ENCODE measurements at regions of chr12 and their contacts with region 1.

Region 1: DNA sequence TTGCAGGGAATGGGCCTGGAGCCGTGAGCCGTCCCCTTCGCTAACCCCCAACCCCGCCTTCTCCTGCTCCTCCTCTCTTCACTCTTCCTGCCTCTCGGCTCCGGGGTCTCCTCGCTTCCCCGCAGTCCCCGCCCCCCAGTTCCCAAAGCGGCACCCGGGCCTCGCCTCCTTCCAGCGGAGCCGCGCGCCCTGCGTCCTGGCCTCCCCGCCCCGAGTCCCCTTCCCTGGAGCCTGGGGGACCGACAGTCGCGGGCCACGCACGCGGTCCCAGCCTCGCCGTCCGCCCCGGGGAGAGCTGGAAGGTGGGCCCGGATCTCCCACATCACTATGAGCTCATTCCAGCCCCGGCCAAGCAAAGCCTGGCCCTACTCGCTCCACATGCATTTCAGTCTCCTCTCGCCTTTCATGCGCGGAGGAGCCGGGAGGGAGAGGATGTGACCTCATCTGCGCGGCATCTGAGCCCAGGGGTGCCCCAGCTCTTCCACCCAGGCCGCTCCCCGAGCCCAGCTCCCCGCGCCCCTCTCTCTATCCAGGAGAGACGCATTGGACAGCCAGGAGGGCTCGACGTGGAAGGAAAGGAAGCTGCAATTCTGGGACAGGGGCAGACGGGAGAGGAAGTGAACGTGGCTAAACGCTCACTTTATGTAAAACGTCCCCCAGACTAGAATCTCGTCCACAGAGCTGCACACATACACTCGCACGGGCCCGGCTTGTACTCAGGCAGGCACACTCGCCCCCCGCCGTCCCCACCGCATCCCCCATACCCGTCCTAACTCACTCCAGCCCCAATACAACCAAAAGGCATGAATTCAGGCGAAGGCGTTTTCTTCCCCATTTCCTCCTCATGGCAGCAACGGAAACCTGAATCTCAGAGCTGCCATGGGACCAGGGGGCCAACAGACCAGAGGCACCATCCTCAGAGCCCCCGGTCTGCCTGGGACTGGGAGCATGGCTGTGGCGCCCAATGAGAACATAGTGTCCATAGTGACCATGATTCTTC is 108.7 kb upstream of the CCND2 start:
- DNase-seq: peak; percentile 60
- ATAC-seq: peak; percentile 75
- H3K4me3 Mint-ChIP-seq: peak overlapping the region; percentile 89
- H3K27ac Mint-ChIP-seq: peak overlapping the region; percentile 95
- H3K4me1 Mint-ChIP-seq: peaks cover 42% of the 10 kb centered on the region
- H3K27me3 Mint-ChIP-seq: no peaks in the 10 kb centered on the region
- CTCF ChIP-seq: no peak

Region 2: DNA sequence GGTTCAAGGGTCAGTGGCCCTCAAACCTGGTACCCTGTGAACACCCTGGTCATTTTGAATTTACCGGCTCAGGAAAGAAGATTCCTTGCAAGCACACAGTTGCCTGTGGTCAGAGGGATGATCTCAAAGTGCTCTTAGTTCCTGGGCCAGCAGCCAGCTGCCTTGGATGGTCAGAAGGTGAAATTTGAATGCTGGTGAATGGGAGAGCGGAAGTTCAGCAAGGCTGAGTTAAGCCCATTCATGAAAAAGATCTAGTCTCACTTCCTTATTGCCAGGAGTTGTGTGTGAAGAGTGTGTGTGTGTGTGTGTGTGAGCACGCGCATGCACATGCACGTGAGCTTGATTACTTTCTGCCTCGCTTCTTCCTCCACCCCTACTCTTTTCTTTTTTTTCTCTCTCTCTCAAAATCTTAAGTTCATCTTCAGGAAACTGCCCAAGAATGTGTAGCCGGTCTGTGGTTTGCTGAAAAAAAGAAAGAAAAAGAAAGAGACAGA is 46.8 kb before region 1 on chr12:
- CTCF ChIA-PET with region 1: no interaction called
- POLR2A ChIA-PET with region 1: interaction called, 6 read pairs
- intact Hi-C with region 1: loop called (anchors 1 kb)
- DNase-seq: no peak
- ATAC-seq: peak; percentile 80
- H3K4me3 Mint-ChIP-seq: peak overlapping the region; percentile 69
- H3K27ac Mint-ChIP-seq: peak overlapping the region; percentile 81
- H3K4me1 Mint-ChIP-seq: peaks cover 56% of the 10 kb centered on the region
- H3K27me3 Mint-ChIP-seq: no peaks in the 10 kb centered on the region
- CTCF ChIP-seq: no peak

Region 3: DNA sequence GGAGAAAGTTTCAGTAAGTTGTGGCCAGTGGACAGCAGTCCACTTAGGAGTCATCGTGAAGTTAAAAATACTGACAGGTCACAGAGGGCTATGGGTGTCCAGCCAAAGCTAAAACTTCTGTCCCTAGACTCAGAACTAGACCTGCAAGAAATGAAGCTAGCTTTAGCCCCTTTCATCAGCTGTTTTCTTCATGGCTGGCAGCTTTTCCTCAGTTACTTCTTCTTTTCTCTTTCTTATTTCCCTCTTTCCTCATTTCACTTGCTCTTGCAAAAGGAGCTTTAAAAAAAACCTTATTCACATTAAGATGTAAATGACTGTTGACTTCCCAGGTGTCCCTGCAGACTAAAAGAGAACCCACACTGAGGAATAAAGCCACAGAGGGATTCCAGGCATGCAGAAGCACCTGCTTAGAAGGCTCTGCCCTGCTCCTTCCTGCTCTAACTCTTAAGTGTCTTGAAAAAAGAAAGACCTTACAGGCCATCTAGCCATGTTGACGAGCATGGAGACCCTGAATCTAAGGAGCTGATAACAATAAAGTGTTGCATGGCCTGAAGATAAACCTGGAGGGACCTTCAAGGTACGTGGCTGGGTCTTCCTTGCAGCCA is 39.0 kb after region 1 on chr12:
- CTCF ChIA-PET with region 1: no interaction called
- POLR2A ChIA-PET with region 1: interaction called, 13 read pairs
- intact Hi-C with region 1: loop called (anchors 1 kb)
- DNase-seq: no peak
- ATAC-seq: peak; percentile 15
- H3K4me3 Mint-ChIP-seq: peak overlapping the region; percentile 1
- H3K27ac Mint-ChIP-seq: peak overlapping the region; percentile 63
- H3K4me1 Mint-ChIP-seq: peaks cover 53% of the 10 kb centered on the region
- H3K27me3 Mint-ChIP-seq: no peaks in the 10 kb centered on the region
- CTCF ChIP-seq: no peak